ENCODE measurements at regions of chr2 and their contacts with region 1.

Region 1: DNA sequence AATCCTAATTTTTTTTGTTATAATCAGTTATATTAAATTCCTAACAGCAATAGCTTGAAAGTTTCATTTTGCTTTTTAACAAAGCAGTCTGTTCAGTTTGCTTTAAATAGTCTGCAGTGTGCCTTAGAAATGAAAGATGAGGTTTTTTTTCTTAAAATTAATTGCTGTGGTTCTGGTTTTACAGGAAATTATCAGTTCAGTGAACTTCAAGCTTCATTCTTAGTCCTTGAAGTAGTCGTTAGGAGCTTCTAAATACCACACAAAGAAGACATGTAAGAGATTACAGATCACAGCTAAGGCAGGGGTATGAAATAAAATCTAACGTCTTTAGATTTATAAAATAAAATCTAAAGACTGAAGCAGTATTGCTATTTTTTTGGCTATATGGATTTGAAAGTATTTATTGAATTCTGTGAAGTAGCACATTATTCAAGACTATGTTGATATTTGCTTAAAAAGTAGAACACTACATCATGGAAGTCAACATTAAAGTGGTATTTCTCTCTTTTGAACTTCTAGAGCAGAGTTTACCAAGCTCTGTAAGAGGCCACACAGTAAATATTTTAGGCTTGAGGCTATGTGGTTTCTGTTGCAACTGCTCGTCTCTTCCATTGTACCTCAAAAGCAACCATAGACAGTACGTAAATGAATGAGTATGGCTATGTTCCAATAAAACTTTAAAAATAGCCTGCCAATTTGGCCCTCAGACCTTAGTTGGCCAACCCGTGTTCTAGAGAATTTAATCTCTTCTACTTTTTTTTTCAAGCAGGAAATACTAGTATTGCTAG is 81.5 kb upstream of the STON1 start:
- DNase-seq: no peak
- H3K4me3 Mint-ChIP-seq: peak overlapping the region; percentile 70
- H3K27ac Mint-ChIP-seq: peak overlapping the region; percentile 97
- H3K4me1 Mint-ChIP-seq: peaks cover 56% of the 10 kb centered on the region
- H3K27me3 Mint-ChIP-seq: no peaks in the 10 kb centered on the region

Region 2: DNA sequence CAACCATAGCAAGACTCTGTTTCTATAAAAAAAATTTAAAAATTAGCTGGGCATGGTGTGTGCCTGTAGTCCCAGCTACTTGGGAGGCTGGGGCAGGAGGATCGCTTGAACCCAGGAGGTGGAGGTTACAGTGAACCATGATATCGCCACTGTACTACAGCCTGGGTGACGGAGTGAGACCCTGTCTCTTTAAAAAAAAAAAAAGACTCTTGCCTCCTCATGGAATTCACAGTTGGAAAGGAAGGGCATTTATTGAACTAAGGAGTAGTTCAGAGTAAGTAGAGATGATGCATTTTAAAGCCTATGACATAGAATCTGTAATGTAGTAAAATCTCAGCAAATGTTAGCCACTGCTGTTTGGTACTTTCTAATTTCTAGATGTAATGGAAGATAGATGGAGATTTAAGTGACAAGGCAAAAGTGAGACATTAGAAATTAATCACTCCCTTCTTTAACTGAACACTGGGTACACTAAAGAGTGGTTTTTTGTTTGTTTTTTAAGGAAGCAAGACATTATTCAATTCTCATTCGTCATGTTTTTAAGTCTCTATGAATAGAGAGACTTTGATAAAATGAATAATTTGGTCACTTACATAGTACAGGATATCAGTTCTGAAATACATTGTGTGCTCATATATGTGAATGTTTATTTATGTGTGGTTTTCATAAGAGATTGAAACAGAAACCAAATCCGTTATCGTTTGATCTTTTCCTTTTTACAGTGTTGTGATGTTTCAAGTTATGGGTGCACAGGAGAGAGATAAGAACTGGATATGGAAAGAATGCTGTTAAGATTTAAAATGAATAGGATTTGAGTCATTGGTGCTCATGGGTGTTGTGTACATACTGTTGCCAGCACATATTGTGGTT is 104.7 kb before region 1 on chr2:
- intact Hi-C with region 1: loop called (anchors 1 kb)
- DNase-seq: peak; percentile 16
- H3K4me3 Mint-ChIP-seq: peak overlapping the region; percentile 1
- H3K27ac Mint-ChIP-seq: peak overlapping the region; percentile 61
- H3K4me1 Mint-ChIP-seq: peaks cover 49% of the 10 kb centered on the region
- H3K27me3 Mint-ChIP-seq: no peaks in the 10 kb centered on the region

Region 3: GRCh38 chr2:48529676-48530032 is 81.2 kb after region 1 on chr2:
- intact Hi-C with region 1: loop called (anchors 5 kb)
- DNase-seq: no peak
- H3K4me3 Mint-ChIP-seq: peak overlapping the region; percentile 91
- H3K27ac Mint-ChIP-seq: peak overlapping the region; percentile 68
- H3K4me1 Mint-ChIP-seq: peaks cover 19% of the 10 kb centered on the region
- H3K27me3 Mint-ChIP-seq: peaks cover 2% of the 10 kb centered on the region

Region 4: DNA sequence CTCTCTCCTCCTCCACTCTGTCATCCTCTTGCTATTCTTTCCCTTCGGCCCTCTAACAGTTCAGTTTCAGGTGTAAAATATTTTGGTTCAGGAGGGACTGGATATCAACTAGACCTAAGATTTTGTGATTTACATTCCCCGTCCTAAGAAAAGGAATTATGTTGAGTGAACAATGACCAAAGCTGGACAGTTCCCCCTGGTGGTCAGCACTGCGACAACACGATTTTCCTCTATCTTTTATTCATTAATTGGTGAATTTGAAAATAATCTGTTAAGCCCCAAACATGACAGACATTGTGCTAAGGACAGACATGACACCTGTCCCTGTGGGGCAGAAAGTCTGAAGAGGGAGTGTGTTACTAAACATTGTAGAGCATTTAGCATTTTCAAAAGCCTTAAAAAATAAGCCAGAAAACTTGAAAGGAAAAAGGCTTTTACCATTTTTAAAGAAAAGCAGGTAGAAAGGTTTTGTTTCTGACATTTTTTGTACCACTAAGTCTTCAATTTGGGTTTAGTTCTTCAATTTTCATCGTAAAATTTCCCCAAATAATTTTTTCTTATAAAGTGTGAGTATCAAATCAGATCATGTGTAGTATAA is 140.8 kb after region 1 on chr2:
- intact Hi-C with region 1: loop called (anchors 5 kb)
- DNase-seq: no peak
- H3K4me3 Mint-ChIP-seq: no peak overlapping the region
- H3K27ac Mint-ChIP-seq: no peak overlapping the region
- H3K4me1 Mint-ChIP-seq: peaks cover 12% of the 10 kb centered on the region
- H3K27me3 Mint-ChIP-seq: peaks cover 5% of the 10 kb centered on the region